ENCODE measurements at regions of chr15 and their contacts with region 1.

Region 1: DNA sequence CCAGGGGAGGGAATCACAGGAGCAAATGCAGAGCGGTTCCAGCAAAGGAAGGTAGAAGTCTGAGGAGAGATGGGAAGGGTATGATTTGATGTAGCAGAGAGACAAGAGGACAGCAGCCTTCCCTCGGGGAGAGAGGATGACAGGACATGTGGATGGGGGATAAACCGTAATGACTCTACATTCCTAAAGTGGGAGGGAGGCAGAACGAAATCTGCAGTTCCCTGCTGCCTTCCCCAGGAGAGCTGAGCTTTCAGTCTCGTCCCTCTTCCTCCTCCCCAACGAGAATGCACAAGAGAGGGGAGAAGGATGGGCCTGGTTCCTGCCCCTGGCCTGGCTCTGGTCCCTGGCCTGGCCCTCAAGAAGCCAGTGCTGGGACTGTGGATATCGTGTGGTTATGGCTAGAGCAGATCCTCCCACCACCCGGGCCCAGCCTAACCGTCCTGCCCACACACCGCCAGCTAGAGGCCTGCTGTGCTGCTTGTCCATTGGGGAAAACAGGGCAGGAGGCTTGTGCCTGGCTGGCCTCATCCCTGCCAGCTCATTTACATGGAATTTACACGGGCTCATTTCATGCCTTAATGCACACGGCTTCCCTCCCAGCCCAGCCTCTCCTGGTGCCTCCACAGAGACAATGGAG is 26.6 kb downstream of the SEMA7A start:
- DNase-seq: peak; percentile 93
- ATAC-seq: peak; percentile 98
- H3K4me3 ChIP-seq: no peak overlapping the region
- H3K27ac ChIP-seq: peak overlapping the region; percentile 88
- H3K4me1 ChIP-seq: peaks cover 22% of the 10 kb centered on the region
- H3K27me3 ChIP-seq: no peaks in the 10 kb centered on the region
- CTCF ChIP-seq: peak; percentile 5; the same call in 1 of the 2 replicates
- POLR2A ChIP-seq: peak; percentile 73
- RAD21 ChIP-seq: peak; percentile 14; the same call in 1 of the 2 replicates

Region 2: GRCh38 chr15:74422650-74423430 is 15.7 kb after region 1 on chr15:
- CTCF ChIA-PET with region 1: no interaction called
- POLR2A ChIA-PET with region 1: no interaction called
- dilution Hi-C with region 1: no loop called
- in situ Hi-C with region 1: no loop called
- intact Hi-C with region 1: loop called (anchors 2 kb)
- DNase-seq: peak; percentile 52
- ATAC-seq: peak; percentile 75
- H3K4me3 ChIP-seq: no peak overlapping the region
- H3K27ac ChIP-seq: peak overlapping the region; percentile 73
- H3K4me1 ChIP-seq: peaks cover 45% of the 10 kb centered on the region
- H3K27me3 ChIP-seq: no peaks in the 10 kb centered on the region
- CTCF ChIP-seq: no peak
- POLR2A ChIP-seq: no peak
- RAD21 ChIP-seq: no peak

Region 3: DNA sequence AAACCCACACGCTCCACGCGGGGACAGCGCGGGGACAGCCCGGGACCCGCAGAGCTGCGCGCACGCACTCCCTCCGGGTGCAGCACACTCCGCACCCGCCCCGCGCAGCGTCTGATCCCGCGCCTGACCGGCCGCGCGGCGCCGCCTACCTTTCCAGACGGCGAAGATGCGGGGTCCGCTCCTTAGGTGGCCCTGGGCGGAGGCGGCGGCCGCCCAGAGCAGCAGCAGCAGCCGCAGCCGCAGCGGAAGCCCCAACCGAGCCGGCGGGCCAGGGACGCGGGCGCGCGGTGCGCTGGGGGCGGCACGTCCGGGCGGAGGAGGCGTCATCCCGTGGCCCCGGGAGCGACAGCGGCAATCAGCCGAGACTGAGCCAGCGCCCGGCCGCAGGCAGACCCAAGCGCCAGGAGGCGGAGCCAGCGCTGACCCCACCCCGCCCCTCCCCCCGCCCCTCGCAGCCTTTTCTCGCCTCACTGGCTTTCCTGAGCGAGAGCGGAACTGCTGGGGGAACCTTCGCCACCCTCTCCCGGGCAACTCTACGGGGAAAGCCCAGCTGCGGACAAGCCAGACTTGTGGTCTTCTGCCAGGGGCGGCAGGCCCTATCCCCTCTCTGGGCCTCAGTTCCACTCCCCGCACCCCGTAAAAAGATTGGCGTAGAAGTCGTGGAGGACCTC is 26.6 kb after region 1 on chr15 and contains the start of gene SEMA7A:
- CTCF ChIA-PET with region 1: no interaction called
- POLR2A ChIA-PET with region 1: no interaction called
- dilution Hi-C with region 1: no loop called
- in situ Hi-C with region 1: no loop called
- intact Hi-C with region 1: loop called (anchors 2 kb)
- DNase-seq: peak; percentile 71
- ATAC-seq: peak; percentile 95
- H3K4me3 ChIP-seq: peak within 1 kb of the TSS; percentile 98
- H3K27ac ChIP-seq: peak within 1 kb of the TSS; percentile 36
- H3K4me1 ChIP-seq: peaks cover 20% of the 10 kb centered on the region
- H3K27me3 ChIP-seq: no peaks in the 10 kb centered on the region
- CTCF ChIP-seq: no peak
- POLR2A ChIP-seq: peak; percentile 93
- RAD21 ChIP-seq: no peak
- total RNA-seq, gene SEMA7A: 27.8 and 30.5 TPM in 2 replicates